ENCODE measurements at regions of chr1 and their contacts with region 1.

Region 1: GRCh38 chr1:212981571-212982328 is 31.4 kb downstream of the VASH2 start:
- DNase-seq: no peak
- ATAC-seq: no peak; a peak in 1 of 6 replicates
- H3K4me3 ChIP-seq: no peak overlapping the region
- H3K27ac ChIP-seq: peak overlapping the region; percentile 5 to 66; a peak in 3 of 6 replicates
- H3K4me1 ChIP-seq: peaks cover 27% of the 10 kb centered on the region
- CTCF ChIP-seq: no peak
- EP300 ChIP-seq: no peak
- POLR2A ChIP-seq: no peak
- RAD21 ChIP-seq: no peak

Region 2: DNA sequence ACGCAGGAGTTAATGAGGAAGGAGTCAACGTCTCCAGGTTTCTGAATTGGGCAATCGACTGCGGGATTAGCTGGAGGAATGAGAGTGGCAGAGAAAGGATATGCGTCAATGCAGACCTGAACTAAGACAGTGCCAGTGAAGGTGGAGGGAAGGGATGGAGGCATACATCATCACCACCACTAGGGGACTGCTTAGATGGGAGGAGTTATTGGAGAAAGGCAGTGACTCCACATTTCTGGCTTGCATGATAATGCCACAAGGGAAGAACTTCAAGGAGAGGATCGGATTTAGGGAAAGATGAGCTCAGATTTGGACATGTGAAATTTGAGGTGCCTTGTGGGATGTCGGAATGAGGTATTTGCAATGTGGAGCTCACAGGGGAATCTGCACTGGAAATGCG is 13.9 kb before region 1 on chr1:
- CTCF ChIA-PET with region 1: interaction called, 27 read pairs
- POLR2A ChIA-PET with region 1: no interaction called
- DNase-seq: peak; percentile 75 to 81
- ATAC-seq: peak; percentile 94 to 99
- H3K4me3 ChIP-seq: no peak overlapping the region
- H3K27ac ChIP-seq: peak overlapping the region in 1 of 2 experiments; percentile 44; a peak in 3 of 6 replicates
- H3K4me1 ChIP-seq: peaks cover 9% of the 10 kb centered on the region; the same call in 2 of the 3 replicates
- CTCF ChIP-seq: peak; percentile 22; the same call in 2 of the 3 replicates
- EP300 ChIP-seq: no peak
- POLR2A ChIP-seq: no peak
- RAD21 ChIP-seq: no peak

Region 3: GRCh38 chr1:213061263-213061662 is 79.5 kb after region 1 on chr1:
- CTCF ChIA-PET with region 1: no interaction called
- POLR2A ChIA-PET with region 1: no interaction called
- DNase-seq: no peak
- ATAC-seq: peak; percentile 38 to 54; a peak in 1 of 6 replicates
- H3K4me3 ChIP-seq: no peak overlapping the region
- H3K27ac ChIP-seq: no peak overlapping the region
- H3K4me1 ChIP-seq: no peaks in the 10 kb centered on the region
- CTCF ChIP-seq: no peak
- EP300 ChIP-seq: no peak
- POLR2A ChIP-seq: no peak
- RAD21 ChIP-seq: no peak

Measured in A549 (cell line).